PC-9 (cell line): ENCODE measurements at regions of chr21 and their contacts with region 1.

Region 1: DNA sequence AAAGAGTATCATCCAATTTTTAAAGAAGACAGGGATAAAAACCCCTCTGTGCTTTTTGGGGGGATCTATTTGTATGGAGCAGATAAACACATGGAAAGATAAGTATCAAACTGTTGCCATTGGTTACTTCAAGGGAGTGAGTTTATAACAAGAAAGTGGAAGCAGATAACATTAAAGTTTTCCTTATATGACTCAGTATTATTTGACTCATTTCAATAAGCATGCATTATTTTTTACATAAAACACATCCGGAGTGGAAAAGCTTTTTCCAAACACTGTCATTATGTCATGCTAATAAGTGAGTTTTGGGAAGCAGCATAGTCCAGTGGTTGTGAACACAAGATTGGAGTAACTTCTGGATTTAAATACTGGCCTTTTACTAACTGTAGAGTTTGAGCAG is 452.2 kb downstream of the LTN1 start:
- DNase-seq: no peak
- H3K4me3 ChIP-seq: no peak overlapping the region
- H3K27ac ChIP-seq: no peak overlapping the region
- H3K4me1 ChIP-seq: no peaks in the 10 kb centered on the region
- H3K27me3 ChIP-seq: no peaks in the 10 kb centered on the region
- CTCF ChIP-seq: no peak

Region 2: GRCh38 chr21:28604946-28605537 is 64.5 kb after region 1 on chr21:
- CTCF ChIA-PET with region 1: interaction called, 17 read pairs
- POLR2A ChIA-PET with region 1: no interaction called
- intact Hi-C with region 1: no loop called
- DNase-seq: no peak
- H3K4me3 ChIP-seq: no peak overlapping the region
- H3K27ac ChIP-seq: no peak overlapping the region
- H3K4me1 ChIP-seq: no peaks in the 10 kb centered on the region
- H3K27me3 ChIP-seq: no peaks in the 10 kb centered on the region
- CTCF ChIP-seq: no peak

Region 3: GRCh38 chr21:28615276-28615675 is 74.8 kb after region 1 on chr21:
- CTCF ChIA-PET with region 1: no interaction called
- POLR2A ChIA-PET with region 1: no interaction called
- intact Hi-C with region 1: no loop called
- DNase-seq: no peak
- H3K4me3 ChIP-seq: no peak overlapping the region
- H3K27ac ChIP-seq: no peak overlapping the region
- H3K4me1 ChIP-seq: no peaks in the 10 kb centered on the region
- H3K27me3 ChIP-seq: no peaks in the 10 kb centered on the region
- CTCF ChIP-seq: no peak